Common myeloid progenitor, CD34-positive (primary cell): ENCODE measurements at regions of chr22 and their contacts with region 1.

Region 1: DNA sequence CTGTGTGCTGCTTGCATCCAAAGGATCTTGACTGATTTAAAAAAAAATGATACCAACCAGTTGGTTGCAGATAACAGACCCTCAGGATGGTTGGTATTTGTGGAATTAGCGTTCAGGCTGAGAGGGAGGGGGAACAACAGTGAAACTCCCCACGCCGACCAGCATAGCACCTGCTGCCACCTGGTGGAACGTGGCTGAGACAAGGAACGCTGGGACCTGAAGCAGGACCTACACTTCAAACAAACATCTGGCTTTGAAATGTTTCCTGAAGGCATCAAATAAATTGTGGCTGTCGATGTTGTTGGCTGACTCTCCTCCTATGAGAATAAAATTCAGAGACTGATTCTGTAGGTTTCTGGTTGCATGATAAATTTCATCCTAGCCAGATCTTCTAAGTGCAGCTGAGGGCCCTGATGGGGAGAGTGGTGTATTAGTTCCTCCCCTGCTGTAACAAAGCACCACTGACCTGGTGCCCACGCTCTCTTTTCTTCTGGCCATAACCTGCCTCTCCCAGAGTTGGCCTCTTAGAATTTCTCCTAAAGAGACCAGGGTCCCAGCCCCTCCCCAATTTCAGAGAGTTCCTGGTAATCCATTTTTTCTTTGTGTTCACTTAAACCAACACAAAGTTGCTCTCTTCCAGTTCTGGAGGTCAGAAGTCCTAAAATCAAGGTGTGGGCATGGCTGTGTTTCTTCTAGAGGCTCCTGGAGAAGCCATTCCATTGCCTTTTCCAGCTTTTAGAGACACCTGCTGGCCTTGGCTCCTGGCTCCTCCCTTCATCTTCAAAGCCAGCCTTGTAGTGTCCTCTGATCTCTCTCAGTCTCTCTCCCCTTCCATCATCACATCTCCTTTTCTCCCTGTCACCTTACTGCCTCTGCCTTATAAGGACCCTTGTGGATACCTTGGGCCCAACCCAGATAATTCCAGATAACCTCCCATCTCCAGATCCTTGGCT is 17.3 kb downstream of the APOL2 start:
- DNase-seq: peak; percentile 52 to 59 (median 52)
- H3K4me3 ChIP-seq: peak overlapping the region in 1 of 7 experiments; percentile 61
- H3K27ac ChIP-seq: no peak overlapping the region
- H3K4me1 ChIP-seq: no peaks in the 10 kb centered on the region
- H3K27me3 ChIP-seq: no peaks in the 10 kb centered on the region

Region 2: DNA sequence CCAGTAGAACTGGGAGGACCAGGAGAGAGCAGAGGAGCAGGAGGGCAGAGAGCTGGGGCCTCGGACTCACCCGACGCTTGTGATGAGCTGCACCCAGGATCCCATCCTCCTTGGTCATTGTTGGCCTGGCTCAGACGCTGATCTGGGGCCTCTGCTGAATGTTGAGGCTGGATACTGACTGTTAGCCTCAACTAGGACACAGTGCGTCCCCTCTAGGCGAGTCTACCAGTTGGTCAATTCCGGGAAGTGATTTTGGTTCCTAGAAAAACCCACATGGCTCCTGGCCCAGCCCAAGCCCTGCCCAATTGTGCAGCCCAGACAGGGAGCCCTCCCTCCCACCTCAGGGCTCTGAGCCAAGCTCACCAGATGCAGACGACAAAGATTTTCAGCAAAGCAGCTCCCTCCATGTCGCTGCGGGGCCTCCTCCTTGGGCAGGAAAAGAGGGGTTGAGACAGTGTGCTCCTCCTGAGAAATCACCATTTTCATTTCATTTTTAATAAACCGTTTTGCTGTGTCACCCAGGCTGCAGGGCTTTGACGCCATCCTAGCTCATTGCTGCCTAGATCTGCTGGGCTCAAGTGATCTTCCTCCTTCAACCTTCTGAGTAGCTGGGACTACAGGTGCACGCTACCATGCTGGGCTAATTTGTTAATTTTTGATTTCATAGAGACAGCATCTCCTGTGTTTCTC is 20.3 kb before region 1 on chr22 and contains the start of gene APOL4:
- CTCF ChIA-PET with region 1: interaction called, 26 read pairs
- POLR2A ChIA-PET with region 1: no interaction called
- DNase-seq: peak in 2 of 3 donors; percentile 33 to 53
- H3K4me3 ChIP-seq: peak within 1 kb of the TSS in 3 of 7 experiments; percentile 55 to 63 (median 58)
- H3K27ac ChIP-seq: peak within 1 kb of the TSS in 1 of 2 experiments; percentile 37
- H3K4me1 ChIP-seq: peaks cover 4 to 70% (median 38%) of the 10 kb centered on the region in 4 experiments
- H3K27me3 ChIP-seq: no peaks in the 10 kb centered on the region

Region 3: DNA sequence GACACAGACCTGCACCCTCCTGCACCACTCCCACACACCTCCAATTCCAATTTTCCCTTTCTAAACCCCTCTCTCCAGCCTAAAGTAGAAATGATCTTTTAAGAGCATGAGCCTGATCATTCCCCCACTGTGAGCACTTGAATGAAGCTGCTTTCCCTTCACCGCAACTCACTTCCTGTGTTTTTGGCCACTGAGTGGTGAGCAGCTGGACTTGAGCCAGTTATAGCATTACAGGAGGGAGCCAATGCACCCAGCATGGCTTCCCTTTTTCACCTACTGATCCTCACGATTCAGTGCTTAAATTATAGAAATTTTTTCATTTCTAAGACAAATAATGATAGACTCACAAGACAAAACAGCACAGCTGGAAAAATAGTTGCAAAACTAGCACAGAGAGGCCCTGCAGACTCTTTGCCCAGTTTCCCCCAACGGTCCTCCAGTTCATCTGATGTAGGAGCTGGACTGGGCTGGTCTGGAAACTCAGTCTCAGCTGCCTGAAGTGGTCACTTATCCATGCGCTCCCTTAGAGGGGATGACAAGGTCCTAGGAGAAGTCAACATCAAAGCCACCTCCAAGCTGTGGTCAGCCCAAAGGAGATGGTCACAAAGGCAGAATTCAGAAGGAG is 10.7 kb before region 1 on chr22:
- CTCF ChIA-PET with region 1: interaction called, 12 read pairs
- POLR2A ChIA-PET with region 1: no interaction called
- DNase-seq: peak; percentile 56 to 84 (median 81)
- H3K4me3 ChIP-seq: peak overlapping the region in 4 of 7 experiments; percentile 6 to 47 (median 35)
- H3K27ac ChIP-seq: no peak overlapping the region
- H3K4me1 ChIP-seq: peaks cover 6 to 52% (median 29%) of the 10 kb centered on the region in 4 experiments
- H3K27me3 ChIP-seq: no peaks in the 10 kb centered on the region